Activated T-helper 2 cell treated with anti-CD3 and anti-CD28 coated beads, Interferon-gamma antibody, Interleukin-2, Interleukin-4, amounts not matched to agents 10 μg/mL and 5 μg/mL and 100 μg/mL, durations not matched to agents 14 hours and 24 hours and 36 hours (primary cell): ENCODE measurements at regions of chr3 and their contacts with region 1.

Region 1: GRCh38 chr3:69306239-69307185 is 79.4 kb downstream of the FRMD4B start:
- DNase-seq: peak; percentile 65
- H3K4me3 Mint-ChIP-seq: no peak overlapping the region
- H3K27ac Mint-ChIP-seq: peak overlapping the region; percentile 75
- H3K4me1 Mint-ChIP-seq: peaks cover 26% of the 10 kb centered on the region
- H3K27me3 Mint-ChIP-seq: peaks cover 1% of the 10 kb centered on the region

Region 2: DNA sequence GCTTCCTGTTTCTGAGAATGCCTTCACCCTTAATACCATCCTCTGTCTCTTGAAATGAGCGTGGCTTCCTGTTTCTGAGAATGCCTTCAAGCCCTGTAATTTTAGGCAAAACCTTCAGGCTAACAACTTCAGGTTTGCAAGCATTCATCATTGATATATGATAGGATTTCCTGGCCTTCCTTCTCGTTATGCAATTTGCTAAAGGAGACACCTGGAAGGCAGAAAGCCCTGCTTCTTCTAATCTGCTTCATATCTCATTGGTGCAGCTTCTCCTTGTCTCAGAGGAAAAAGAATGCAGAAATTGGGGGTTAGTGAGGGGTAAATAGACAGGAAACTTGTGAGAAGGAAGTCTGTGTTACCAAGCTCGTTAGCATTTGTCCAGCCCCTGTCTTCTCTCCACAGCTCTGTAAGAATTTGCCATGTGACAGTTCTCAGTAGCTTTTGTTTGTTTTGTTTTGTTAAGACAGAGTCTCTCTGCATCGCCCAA is 214.4 kb before region 1 on chr3:
- intact Hi-C with region 1: loop called (anchors 5 kb)
- DNase-seq: peak; percentile 26
- H3K4me3 Mint-ChIP-seq: peak overlapping the region; percentile 85
- H3K27ac Mint-ChIP-seq: peak overlapping the region; percentile 95
- H3K4me1 Mint-ChIP-seq: peaks cover 72% of the 10 kb centered on the region
- H3K27me3 Mint-ChIP-seq: no peaks in the 10 kb centered on the region

Region 3: GRCh38 chr3:69161587-69162307 is 144.8 kb before region 1 on chr3:
- intact Hi-C with region 1: loop called (anchors 1 kb)
- DNase-seq: peak; percentile 13
- H3K4me3 Mint-ChIP-seq: no peak overlapping the region
- H3K27ac Mint-ChIP-seq: no peak overlapping the region
- H3K4me1 Mint-ChIP-seq: peaks cover 15% of the 10 kb centered on the region
- H3K27me3 Mint-ChIP-seq: peaks cover 7% of the 10 kb centered on the region

Region 4: GRCh38 chr3:69212411-69213139 is 93.9 kb before region 1 on chr3:
- intact Hi-C with region 1: loop called (anchors 1 kb)
- DNase-seq: no peak
- H3K4me3 Mint-ChIP-seq: peak overlapping the region; percentile 26
- H3K27ac Mint-ChIP-seq: peak overlapping the region; percentile 89
- H3K4me1 Mint-ChIP-seq: peaks cover 49% of the 10 kb centered on the region
- H3K27me3 Mint-ChIP-seq: no peaks in the 10 kb centered on the region

Region 5: GRCh38 chr3:69282181-69282580 is 24.3 kb before region 1 on chr3:
- intact Hi-C with region 1: loop called (anchors 1 kb)
- DNase-seq: no peak
- H3K4me3 Mint-ChIP-seq: peak overlapping the region; percentile 37
- H3K27ac Mint-ChIP-seq: peak overlapping the region; percentile 81
- H3K4me1 Mint-ChIP-seq: peaks cover 24% of the 10 kb centered on the region
- H3K27me3 Mint-ChIP-seq: no peaks in the 10 kb centered on the region

Region 6: GRCh38 chr3:69410250-69410649 is 103.7 kb after region 1 on chr3:
- intact Hi-C with region 1: loop called (anchors 2 kb)
- DNase-seq: peak; percentile 49
- H3K4me3 Mint-ChIP-seq: no peak overlapping the region
- H3K27ac Mint-ChIP-seq: no peak overlapping the region
- H3K4me1 Mint-ChIP-seq: peaks cover 10% of the 10 kb centered on the region
- H3K27me3 Mint-ChIP-seq: peaks cover 13% of the 10 kb centered on the region